ENCODE measurements at regions of chr5 and their contacts with region 1.

Region 1: GRCh38 chr5:123051206-123051605 is 14.7 kb upstream of the PPIC start:
- DNase-seq: no peak
- ATAC-seq: no peak
- H3K4me3 ChIP-seq: no peak overlapping the region
- H3K27ac ChIP-seq: no peak overlapping the region
- H3K4me1 ChIP-seq: no peaks in the 10 kb centered on the region
- H3K27me3 ChIP-seq: no peaks in the 10 kb centered on the region

Region 2: DNA sequence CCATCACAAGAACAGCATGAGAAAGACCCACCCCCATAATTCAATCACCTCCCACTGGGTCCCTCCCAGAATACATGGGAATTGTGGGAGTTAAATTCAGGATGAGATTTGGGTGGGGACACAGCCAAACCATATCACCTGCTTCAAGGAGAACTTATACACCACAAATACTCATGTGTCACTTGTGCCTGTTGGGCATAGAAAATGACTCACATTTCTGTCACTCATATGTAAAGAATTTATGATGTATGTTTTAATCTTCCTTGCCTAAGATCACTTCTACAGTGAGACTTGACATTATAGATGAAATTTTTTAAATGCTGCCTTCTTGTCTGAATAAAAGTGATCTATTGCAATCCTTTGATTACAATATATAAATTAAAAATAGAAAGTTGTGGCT is 14.8 kb after region 1 on chr5:
- intact Hi-C with region 1: loop called in 1 of 2 experiments (anchors 2 kb)
- DNase-seq: no peak
- ATAC-seq: no peak
- H3K4me3 ChIP-seq: no peak overlapping the region
- H3K27ac ChIP-seq: no peak overlapping the region
- H3K4me1 ChIP-seq: no peaks in the 10 kb centered on the region
- H3K27me3 ChIP-seq: no peaks in the 10 kb centered on the region

Measured in aorta (tissue), 5 donors.